A549 (cell line): ENCODE measurements at regions of chr15 and their contacts with region 1.

Region 1: GRCh38 chr15:79853458-79854328 is 43.1 kb downstream of the MTHFS start:
- DNase-seq: peak; percentile 71 to 90
- ATAC-seq: peak; percentile 98 to 99
- H3K4me3 ChIP-seq: no peak overlapping the region
- H3K27ac ChIP-seq: peak overlapping the region; percentile 10 to 42; a peak in 4 of 6 replicates
- H3K4me1 ChIP-seq: peaks cover 14% of the 10 kb centered on the region
- CTCF ChIP-seq: peak; percentile 98
- EP300 ChIP-seq: no peak
- POLR2A ChIP-seq: no peak
- RAD21 ChIP-seq: peak; percentile 91 to 92

Region 2: DNA sequence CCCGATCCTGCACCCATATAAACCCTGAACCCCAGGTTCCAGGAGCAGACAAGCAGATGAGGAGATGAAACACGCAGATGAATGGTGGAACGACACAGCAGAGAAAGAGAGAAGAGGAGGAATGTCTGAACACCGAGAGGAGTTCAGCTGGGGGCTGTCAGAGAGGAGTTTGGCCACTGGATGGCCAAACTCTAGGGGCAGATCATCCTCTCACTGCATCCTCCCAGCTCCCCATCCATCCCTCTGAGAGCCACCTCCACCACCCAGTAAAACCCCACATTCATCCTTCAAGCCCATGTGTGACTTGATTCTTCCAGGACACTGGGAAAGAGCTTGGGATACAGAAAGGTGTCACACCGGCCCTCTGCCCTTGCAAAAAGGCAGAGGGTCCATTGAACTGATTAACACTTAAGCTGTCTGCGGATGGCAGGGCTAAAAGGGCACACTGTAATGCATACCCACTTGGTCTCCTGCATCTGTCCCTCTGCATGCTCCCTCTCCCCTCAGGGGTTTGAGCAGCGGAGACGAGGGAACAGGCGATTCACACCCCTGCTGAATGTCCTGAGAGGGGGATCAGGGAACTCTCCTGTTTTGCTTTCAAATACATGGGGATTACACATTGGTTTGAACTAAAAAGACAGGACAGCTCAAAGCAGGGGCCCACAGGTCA is 489.0 kb before region 1 on chr15:
- CTCF ChIA-PET with region 1: interaction called, 12 read pairs
- POLR2A ChIA-PET with region 1: no interaction called
- DNase-seq: no peak
- ATAC-seq: peak in 1 of 2 experiments; percentile 47; a peak in 1 of 6 replicates
- H3K4me3 ChIP-seq: no peak overlapping the region
- H3K27ac ChIP-seq: no peak overlapping the region
- H3K4me1 ChIP-seq: no peaks in the 10 kb centered on the region
- CTCF ChIP-seq: no peak
- EP300 ChIP-seq: no peak
- POLR2A ChIP-seq: no peak
- RAD21 ChIP-seq: no peak

Region 3: DNA sequence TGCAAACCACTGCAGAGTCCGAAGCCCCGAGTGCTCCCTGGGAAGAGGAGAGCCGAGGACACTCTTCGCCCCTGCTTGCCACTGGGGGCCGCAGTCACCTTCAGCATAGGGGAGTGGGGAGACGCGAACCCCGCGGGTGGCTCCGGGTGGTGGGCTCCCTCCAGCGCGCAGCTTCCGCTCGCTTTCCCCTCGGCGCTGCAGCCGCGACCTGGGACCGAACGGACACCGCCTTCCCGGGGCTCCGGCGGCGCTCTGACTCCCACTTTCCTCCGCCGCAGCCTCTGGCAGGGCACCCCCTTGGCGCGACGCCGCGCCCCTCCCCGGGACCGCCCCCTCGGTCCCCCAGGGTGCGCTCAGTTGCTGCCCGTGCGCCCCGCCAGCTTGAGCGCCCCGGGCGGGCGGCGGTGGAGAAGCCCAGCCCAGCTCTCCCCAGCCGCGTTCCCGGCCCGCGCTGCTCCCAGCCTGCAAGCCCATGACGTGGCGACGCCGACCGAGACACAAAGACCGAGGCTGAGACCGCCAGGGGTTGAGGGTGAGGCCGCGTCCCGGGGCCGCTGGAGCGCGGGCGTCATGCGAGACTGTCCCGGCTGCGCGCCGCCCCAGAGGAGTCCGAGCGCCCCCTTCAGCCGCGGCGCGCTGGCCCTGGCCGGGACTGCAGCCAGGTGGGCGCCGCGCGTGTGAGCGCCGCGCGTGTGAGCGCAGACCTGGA is 421.9 kb before region 1 on chr15 and contains the start of gene MINAR1:
- CTCF ChIA-PET with region 1: interaction called, 24 read pairs
- POLR2A ChIA-PET with region 1: no interaction called
- DNase-seq: peak; percentile 39 to 50
- ATAC-seq: peak; percentile 79 to 91
- H3K4me3 ChIP-seq: peak within 1 kb of the TSS; percentile 58
- H3K27ac ChIP-seq: peak within 1 kb of the TSS; percentile 28 to 67; a peak in 4 of 6 replicates
- H3K4me1 ChIP-seq: no peaks in the 10 kb centered on the region
- CTCF ChIP-seq: peak; percentile 52
- EP300 ChIP-seq: no peak
- POLR2A ChIP-seq: no peak
- RAD21 ChIP-seq: peak; percentile 23 to 51; a peak in 2 of 5 replicates
- polyA plus RNA-seq, gene MINAR1: 0.88 and 1.5 TPM in 2 replicates

Region 4: GRCh38 chr15:79756365-79756764 is 97.3 kb before region 1 on chr15:
- CTCF ChIA-PET with region 1: no interaction called
- POLR2A ChIA-PET with region 1: no interaction called
- DNase-seq: no peak
- ATAC-seq: no peak
- H3K4me3 ChIP-seq: no peak overlapping the region
- H3K27ac ChIP-seq: no peak overlapping the region
- H3K4me1 ChIP-seq: no peaks in the 10 kb centered on the region
- CTCF ChIP-seq: no peak
- EP300 ChIP-seq: no peak
- POLR2A ChIP-seq: no peak
- RAD21 ChIP-seq: no peak

Region 5: DNA sequence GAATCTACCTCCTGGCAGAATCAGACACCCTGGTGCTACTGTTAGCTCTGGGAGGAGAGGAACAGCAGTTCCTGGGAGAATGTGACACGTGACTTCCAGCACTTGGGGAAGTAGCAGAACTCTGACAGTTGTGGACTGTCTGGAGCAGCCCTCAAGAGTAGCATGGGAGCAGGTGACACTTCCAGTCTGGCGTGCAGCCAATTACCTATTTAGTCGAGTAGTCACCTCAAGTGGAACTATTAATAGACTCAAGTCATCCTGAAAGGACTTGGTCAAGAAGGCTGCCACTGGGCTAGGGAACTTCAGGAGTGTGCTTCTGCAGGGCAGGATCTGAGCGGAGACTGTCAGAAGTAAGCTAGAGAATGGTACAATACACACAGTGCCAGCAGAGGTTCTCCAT is 19.2 kb before region 1 on chr15:
- CTCF ChIA-PET with region 1: interaction called, 36 read pairs
- POLR2A ChIA-PET with region 1: no interaction called
- DNase-seq: no peak
- ATAC-seq: no peak
- H3K4me3 ChIP-seq: no peak overlapping the region
- H3K27ac ChIP-seq: no peak overlapping the region
- H3K4me1 ChIP-seq: no peaks in the 10 kb centered on the region
- CTCF ChIP-seq: no peak
- EP300 ChIP-seq: no peak
- POLR2A ChIP-seq: no peak
- RAD21 ChIP-seq: no peak

Region 6: DNA sequence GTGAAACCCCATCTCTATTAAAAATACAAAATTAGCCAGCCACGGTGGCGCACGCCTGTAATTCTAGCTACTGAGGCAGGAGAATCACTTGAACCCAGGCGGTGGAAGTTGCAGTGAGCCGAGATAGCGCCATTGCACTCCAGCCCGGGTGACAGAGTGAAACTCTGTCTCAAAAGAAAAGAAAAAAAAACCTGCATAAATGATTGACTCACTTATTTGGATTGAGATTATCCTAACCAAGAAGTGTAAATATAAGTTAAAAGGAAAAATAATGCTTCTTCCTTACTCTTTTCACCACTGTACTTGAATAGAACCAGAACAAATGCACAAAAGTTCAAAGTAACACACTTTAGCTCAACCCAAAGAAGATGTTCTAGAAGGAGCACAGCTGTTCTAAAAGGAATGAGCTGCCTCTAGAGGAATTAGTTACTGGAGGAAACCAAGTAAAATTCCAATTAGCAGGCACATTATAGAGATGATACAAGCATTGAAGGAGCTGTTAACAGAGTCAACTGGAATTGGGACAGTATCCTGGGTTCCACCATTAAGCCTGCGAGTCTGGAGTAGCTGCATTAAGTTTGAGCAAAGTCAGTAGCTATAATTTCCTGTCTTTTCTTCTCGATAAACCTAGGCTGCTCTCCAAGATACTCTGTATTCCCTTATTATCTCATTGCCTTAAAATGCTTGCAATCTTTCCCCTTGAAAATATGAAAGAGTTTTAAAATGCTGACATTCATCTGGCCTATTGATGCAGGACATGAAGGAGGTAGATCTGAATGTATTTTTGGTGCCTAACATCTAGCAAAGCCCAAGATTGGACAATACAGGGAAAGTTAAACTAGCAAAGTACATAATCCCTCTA is 33.6 kb after region 1 on chr15:
- CTCF ChIA-PET with region 1: interaction called, 12 read pairs
- POLR2A ChIA-PET with region 1: no interaction called
- DNase-seq: no peak
- ATAC-seq: no peak
- H3K4me3 ChIP-seq: no peak overlapping the region
- H3K27ac ChIP-seq: no peak overlapping the region
- H3K4me1 ChIP-seq: peaks cover 10% of the 10 kb centered on the region; the same call in 2 of the 3 replicates
- CTCF ChIP-seq: no peak
- EP300 ChIP-seq: no peak
- POLR2A ChIP-seq: no peak
- RAD21 ChIP-seq: no peak

Region 7: DNA sequence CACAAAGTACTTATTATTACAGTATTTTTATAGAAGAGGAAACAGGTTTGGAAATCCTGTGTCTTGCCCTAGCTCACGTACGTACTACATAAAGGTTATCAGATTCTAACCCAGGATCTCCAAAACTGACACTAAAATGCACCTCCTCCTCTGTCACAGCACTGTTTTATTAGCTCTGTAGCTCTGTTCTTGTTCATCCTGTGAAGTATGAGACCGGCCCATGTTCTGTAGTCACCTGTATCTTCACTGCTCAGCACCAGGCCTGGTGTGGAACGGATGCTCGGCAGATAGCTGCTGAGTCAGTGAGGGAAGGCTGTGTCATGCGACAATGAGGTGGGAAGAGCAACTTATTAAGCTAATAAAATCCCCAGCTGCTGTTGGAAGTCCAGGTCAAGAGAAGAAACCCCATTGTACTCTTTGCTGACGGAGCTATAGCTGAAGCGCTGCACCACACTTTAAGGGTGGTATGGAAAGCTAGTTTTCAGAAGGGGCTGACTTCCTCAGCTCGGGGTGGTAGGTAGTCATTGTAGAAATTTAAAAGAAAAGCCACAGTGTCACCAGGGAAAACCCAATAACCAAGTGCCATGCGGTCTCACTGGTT is 94.5 kb after region 1 on chr15:
- CTCF ChIA-PET with region 1: no interaction called
- POLR2A ChIA-PET with region 1: no interaction called
- DNase-seq: peak in 1 of 2 experiments; percentile 52
- ATAC-seq: peak; percentile 52 to 54; a peak in 4 of 6 replicates
- H3K4me3 ChIP-seq: no peak overlapping the region
- H3K27ac ChIP-seq: peak overlapping the region; percentile 20 to 47; a peak in 4 of 6 replicates
- H3K4me1 ChIP-seq: peaks cover 27% of the 10 kb centered on the region
- CTCF ChIP-seq: no peak
- EP300 ChIP-seq: no peak
- POLR2A ChIP-seq: no peak
- RAD21 ChIP-seq: no peak

Region 8: DNA sequence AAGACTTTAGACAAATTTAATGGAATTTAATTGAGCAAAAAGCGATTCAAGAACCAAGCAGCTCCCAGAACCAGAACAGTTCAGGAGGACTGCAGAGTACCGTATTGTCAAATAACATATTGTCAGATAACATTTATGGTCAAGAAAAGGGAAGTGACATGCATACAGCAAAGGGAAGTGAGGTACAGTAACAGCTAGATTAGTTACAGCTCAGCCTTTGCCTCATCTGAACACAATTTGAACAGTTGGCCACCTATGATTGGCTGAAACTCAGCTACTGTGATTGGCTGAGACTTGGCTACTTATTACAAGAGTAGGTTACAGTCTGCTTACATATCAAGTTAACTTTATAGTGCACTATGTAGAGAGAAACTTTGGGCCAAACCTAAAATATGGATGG is 227.7 kb after region 1 on chr15:
- CTCF ChIA-PET with region 1: no interaction called
- POLR2A ChIA-PET with region 1: no interaction called
- DNase-seq: no peak
- ATAC-seq: peak; percentile 32 to 45; a peak in 4 of 6 replicates
- H3K4me3 ChIP-seq: no peak overlapping the region
- H3K27ac ChIP-seq: no peak overlapping the region
- H3K4me1 ChIP-seq: no peaks in the 10 kb centered on the region
- CTCF ChIP-seq: no peak
- EP300 ChIP-seq: no peak
- POLR2A ChIP-seq: no peak
- RAD21 ChIP-seq: no peak